ENCODE measurements at regions of chr4 and their contacts with region 1.

Region 1: DNA sequence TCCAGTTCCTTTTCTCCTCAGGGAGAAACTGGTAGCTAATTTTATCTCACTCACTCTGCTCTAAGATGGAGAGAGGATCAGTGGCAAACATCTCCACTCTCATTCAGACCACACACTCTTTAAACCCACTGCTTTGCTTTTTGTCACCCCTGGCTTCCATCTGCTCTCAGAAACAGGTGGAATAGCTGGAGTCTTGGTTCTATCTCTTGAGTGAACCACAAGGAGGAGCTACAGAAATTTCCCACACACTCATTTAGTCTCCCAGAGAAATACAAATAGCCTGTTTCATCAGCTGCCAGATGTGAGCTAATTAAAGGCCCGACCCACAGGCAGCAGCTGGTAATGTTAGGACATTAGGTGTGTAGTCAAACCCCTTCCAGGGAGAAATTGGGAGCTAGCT is 96.6 kb downstream of the STPG2 start:
- DNase-seq: no peak
- H3K4me3 ChIP-seq: no peak overlapping the region
- H3K27ac ChIP-seq: no peak overlapping the region
- H3K4me1 ChIP-seq: peaks cover 0 to 3% (median 0%) of the 10 kb centered on the region in 4 experiments; a peak in 1 of 7 replicates
- H3K27me3 ChIP-seq: no peaks in the 10 kb centered on the region
- CTCF ChIP-seq: peak in 2 of 3 experiments; percentile 28 to 35; a peak in 3 of 4 replicates
- EP300 ChIP-seq: no peak
- POLR2A ChIP-seq: no peak
- RAD21 ChIP-seq: peak; percentile 32 to 41

Region 2: DNA sequence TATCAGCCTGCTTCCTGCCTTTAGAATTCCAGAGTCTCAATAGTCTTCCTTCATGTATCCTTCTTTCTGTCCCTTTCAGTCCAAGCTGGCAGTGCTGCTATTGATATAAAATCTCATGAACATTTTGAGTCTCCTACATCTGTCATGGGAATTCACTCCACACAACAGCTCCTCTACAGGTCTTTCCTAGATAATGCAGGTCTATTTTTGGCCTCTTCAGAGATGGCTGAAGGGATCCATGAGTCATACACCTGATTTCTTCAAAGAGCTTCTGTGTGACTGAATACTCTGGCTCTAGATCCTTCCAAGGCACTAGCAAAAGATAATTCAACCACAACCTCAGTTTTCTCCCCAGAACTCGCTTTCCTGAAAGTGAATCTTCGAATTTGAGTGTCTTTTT is 18.8 kb before region 1 on chr4:
- CTCF ChIA-PET with region 1: interaction called, 18 read pairs
- POLR2A ChIA-PET with region 1: no interaction called
- DNase-seq: no peak
- H3K4me3 ChIP-seq: no peak overlapping the region
- H3K27ac ChIP-seq: no peak overlapping the region
- H3K4me1 ChIP-seq: no peaks in the 10 kb centered on the region
- H3K27me3 ChIP-seq: no peaks in the 10 kb centered on the region
- CTCF ChIP-seq: peak in 2 of 3 experiments; percentile 21 to 54; a peak in 2 of 4 replicates
- EP300 ChIP-seq: no peak
- POLR2A ChIP-seq: no peak
- RAD21 ChIP-seq: peak; percentile 31 to 32; a peak in 2 of 4 replicates

Region 3: GRCh38 chr4:98150092-98150761 is 103.6 kb after region 1 on chr4:
- CTCF ChIA-PET with region 1: no interaction called
- POLR2A ChIA-PET with region 1: no interaction called
- DNase-seq: no peak
- H3K4me3 ChIP-seq: no peak overlapping the region
- H3K27ac ChIP-seq: no peak overlapping the region
- H3K4me1 ChIP-seq: no peaks in the 10 kb centered on the region
- H3K27me3 ChIP-seq: no peaks in the 10 kb centered on the region
- CTCF ChIP-seq: no peak
- EP300 ChIP-seq: no peak
- POLR2A ChIP-seq: no peak
- RAD21 ChIP-seq: peak in 1 of 2 experiments; percentile 27; a peak in 2 of 4 replicates

Measured in H1 (cell line).